ENCODE measurements at regions of chr12 and their contacts with region 1.

Region 1: GRCh38 chr12:12606781-12607589 is 4.7 kb upstream of the CREBL2 start:
- DNase-seq: no peak
- ATAC-seq: no peak
- H3K4me3 ChIP-seq: no peak overlapping the region
- H3K4me3 Mint-ChIP-seq: peak overlapping the region in 1 of 3 donors; percentile 35
- H3K27ac ChIP-seq: no peak overlapping the region
- H3K27ac Mint-ChIP-seq: peak overlapping the region; percentile 54 to 77
- H3K4me1 ChIP-seq: peaks cover 5 to 8% of the 10 kb centered on the region in 2 experiments
- H3K4me1 Mint-ChIP-seq: peaks cover 25 to 29% (median 25%) of the 10 kb centered on the region in 3 donors
- H3K27me3 ChIP-seq: no peaks in the 10 kb centered on the region
- H3K27me3 Mint-ChIP-seq: no peaks in the 10 kb centered on the region

Region 2: GRCh38 chr12:12819671-12820311 is 212.8 kb after region 1 on chr12:
- CTCF ChIA-PET with region 1: interaction called in 1 of 2 experiments, 12 read pairs
- POLR2A ChIA-PET with region 1: no interaction called
- DNase-seq: no peak
- ATAC-seq: no peak
- H3K4me3 ChIP-seq: no peak overlapping the region
- H3K4me3 Mint-ChIP-seq: no peak overlapping the region
- H3K27ac ChIP-seq: no peak overlapping the region
- H3K27ac Mint-ChIP-seq: peak overlapping the region in 1 of 2 donors; percentile 11
- H3K4me1 ChIP-seq: peaks cover under 1 to 6% of the 10 kb centered on the region in 2 experiments
- H3K4me1 Mint-ChIP-seq: peaks cover 45 to 53% (median 48%) of the 10 kb centered on the region in 3 donors
- H3K27me3 ChIP-seq: no peaks in the 10 kb centered on the region
- H3K27me3 Mint-ChIP-seq: no peaks in the 10 kb centered on the region

Region 3: DNA sequence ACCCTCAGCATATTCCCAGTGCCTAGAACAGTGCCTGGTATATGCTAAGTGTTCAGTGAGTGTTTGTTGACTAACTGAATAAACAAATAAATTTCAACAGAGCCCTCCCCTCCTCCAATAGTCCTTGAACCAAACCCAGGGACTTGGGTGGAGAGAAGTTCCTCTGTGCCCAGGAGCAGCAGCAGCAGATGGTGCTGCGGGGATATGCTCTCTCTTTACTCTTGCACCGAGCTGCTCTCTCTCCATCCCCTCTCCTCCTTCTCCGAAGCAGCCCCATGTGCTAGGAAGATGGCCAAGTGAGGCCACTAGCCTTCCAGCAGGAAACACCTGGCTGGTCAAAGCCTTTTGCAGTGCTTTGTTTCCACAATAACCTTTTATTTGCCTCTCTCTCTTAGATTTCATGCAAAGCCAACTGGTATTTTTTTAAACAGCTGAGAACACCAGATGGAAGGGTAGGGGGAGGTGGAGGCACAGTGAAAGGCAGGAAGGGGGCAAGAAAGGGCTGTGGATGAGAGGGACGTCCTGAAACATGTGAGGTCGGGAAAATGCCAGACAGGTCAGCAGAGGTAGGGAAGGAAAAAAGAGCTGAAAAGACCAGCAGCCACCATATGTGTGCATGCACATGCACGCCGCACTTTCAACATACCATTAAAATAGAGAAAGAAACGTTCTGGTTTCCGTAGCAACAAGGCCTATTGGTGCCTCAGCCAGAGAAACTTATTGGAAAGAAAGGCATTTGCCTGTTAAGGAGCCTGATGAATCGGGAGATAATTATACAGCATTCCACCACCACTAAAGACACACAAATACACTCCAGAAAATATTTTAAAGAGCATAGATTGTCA is 668.5 kb after region 1 on chr12:
- CTCF ChIA-PET with region 1: no interaction called
- POLR2A ChIA-PET with region 1: no interaction called
- DNase-seq: no peak
- ATAC-seq: no peak
- H3K4me3 ChIP-seq: no peak overlapping the region
- H3K4me3 Mint-ChIP-seq: no peak overlapping the region
- H3K27ac ChIP-seq: no peak overlapping the region
- H3K27ac Mint-ChIP-seq: no peak overlapping the region
- H3K4me1 ChIP-seq: peaks cover 0 to 7% of the 10 kb centered on the region in 2 experiments
- H3K4me1 Mint-ChIP-seq: peaks cover 4 to 6% (median 5%) of the 10 kb centered on the region in 3 donors
- H3K27me3 ChIP-seq: peaks cover 17 to 42% of the 10 kb centered on the region in 2 experiments
- H3K27me3 Mint-ChIP-seq: peaks cover 45 to 51% of the 10 kb centered on the region in 2 donors

Region 4: GRCh38 chr12:13436696-13437391 is 829.9 kb after region 1 on chr12:
- CTCF ChIA-PET with region 1: no interaction called
- POLR2A ChIA-PET with region 1: no interaction called
- DNase-seq: no peak
- ATAC-seq: no peak
- H3K4me3 ChIP-seq: no peak overlapping the region
- H3K4me3 Mint-ChIP-seq: no peak overlapping the region
- H3K27ac ChIP-seq: no peak overlapping the region
- H3K27ac Mint-ChIP-seq: no peak overlapping the region
- H3K4me1 ChIP-seq: no peaks in the 10 kb centered on the region
- H3K4me1 Mint-ChIP-seq: no peaks in the 10 kb centered on the region
- H3K27me3 ChIP-seq: no peaks in the 10 kb centered on the region
- H3K27me3 Mint-ChIP-seq: peaks cover 0 to 11% of the 10 kb centered on the region in 2 donors

Measured in T-cell (primary cell).